ENCODE measurements at regions of chr9 and their contacts with region 1.

Region 1: GRCh38 chr9:71768388-71769174 is at the start of gene CEMIP2:
- DNase-seq: peak; percentile 76 to 94 (median 89)
- ATAC-seq: peak; percentile 81
- H3K4me3 ChIP-seq: peak within 1 kb of the TSS; percentile 94 to 96
- H3K4me3 Mint-ChIP-seq: peak within 1 kb of the TSS; percentile 91
- H3K27ac ChIP-seq: peak within 1 kb of the TSS; percentile 87 to 96
- H3K27ac Mint-ChIP-seq: peak within 1 kb of the TSS; percentile 96
- H3K4me1 ChIP-seq: peaks cover 36% of the 10 kb centered on the region
- H3K4me1 Mint-ChIP-seq: peaks cover 44% of the 10 kb centered on the region
- H3K27me3 ChIP-seq: no peaks in the 10 kb centered on the region
- H3K27me3 Mint-ChIP-seq: no peaks in the 10 kb centered on the region
- CTCF ChIP-seq: peak; percentile 63
- total RNA-seq, gene CEMIP2: 286 to 313 TPM

Region 2: DNA sequence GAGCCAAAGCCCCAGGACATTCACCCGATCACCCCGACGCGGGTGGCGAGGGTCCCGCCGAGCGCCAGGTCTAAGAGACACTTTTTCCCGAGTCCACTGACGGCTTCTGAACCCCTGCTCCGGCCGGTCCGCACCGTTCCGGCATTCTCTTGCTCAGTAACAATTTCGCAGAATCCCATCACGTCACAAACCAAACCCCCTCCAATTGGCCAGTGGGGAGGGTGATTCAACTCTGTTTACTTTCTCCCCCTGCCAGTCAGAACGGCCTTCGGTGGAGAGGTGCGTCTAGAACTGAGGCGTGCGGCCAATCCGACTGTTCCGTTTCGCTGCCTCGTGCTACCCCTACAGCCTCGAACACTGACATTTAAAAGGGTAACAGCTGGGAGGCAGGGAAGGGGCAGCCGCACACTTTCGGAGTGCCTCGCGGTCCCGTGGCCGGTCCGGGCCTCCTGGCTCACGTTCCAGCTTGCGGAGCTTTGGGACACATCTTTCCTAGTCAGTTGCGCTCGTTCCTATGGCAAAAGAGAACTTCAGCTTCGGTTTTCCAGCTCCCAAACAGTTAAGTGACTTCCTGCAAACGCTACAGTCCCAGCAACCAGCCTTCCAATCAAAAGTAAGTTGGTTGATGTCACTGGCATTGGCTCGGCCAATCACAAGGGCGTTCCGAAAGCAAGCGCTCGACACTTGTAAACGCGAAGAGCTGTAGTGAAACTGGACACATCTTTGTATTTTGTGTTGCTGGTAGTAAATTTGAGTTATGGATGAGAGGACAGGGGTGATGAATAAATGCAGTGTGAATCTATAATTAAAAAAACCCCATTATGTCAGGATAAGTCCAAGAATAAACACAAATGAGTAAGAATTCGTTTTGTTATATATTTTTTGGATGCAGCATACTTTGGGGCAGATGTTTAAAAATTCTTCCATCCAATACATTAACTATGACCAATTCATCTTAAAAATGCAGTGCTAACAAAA is 1354.5 kb before region 1 on chr9 and contains the start of gene KLF9:
- CTCF ChIA-PET with region 1: no interaction called
- POLR2A ChIA-PET with region 1: no interaction called
- intact Hi-C with region 1: loop called in 1 of 2 experiments (anchors 5 kb)
- DNase-seq: peak; percentile 80 to 98 (median 90)
- ATAC-seq: peak; percentile 78
- H3K4me3 ChIP-seq: peak within 1 kb of the TSS; percentile 40 to 73
- H3K4me3 Mint-ChIP-seq: peak within 1 kb of the TSS; percentile 99
- H3K27ac ChIP-seq: peak within 1 kb of the TSS; percentile 94 to 99
- H3K27ac Mint-ChIP-seq: peak within 1 kb of the TSS; percentile 100
- H3K4me1 ChIP-seq: peaks cover 39% of the 10 kb centered on the region
- H3K4me1 Mint-ChIP-seq: peaks cover 53% of the 10 kb centered on the region
- H3K27me3 ChIP-seq: no peaks in the 10 kb centered on the region
- H3K27me3 Mint-ChIP-seq: no peaks in the 10 kb centered on the region
- CTCF ChIP-seq: no peak
- total RNA-seq, gene KLF9: 84.0 to 87.1 TPM

Region 3: DNA sequence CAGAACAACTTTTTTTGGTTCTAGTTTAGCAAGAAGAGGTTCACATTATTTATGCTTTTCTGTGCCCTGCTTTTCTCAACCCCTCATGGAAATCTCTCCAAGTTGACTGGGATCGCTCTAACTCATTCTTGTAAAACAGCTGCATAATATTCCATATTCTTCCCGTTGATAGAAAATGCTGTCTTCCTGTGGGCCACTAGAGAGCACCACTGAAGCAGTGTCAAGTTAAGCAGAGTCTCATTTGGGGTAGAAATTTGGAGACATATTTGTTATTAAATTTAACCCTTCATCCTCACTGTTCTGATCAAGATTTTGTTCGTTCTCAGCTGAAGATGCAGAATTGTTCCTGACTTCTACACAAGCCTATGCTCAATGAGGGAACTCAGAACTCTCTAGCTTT is 140.3 kb before region 1 on chr9:
- CTCF ChIA-PET with region 1: interaction called, 5 read pairs
- POLR2A ChIA-PET with region 1: no interaction called
- intact Hi-C with region 1: loop called in 1 of 2 experiments (anchors 2 kb)
- DNase-seq: peak in 2 of 9 experiments; percentile 34 to 48
- ATAC-seq: no peak
- H3K4me3 ChIP-seq: no peak overlapping the region
- H3K4me3 Mint-ChIP-seq: no peak overlapping the region
- H3K27ac ChIP-seq: no peak overlapping the region
- H3K27ac Mint-ChIP-seq: no peak overlapping the region
- H3K4me1 ChIP-seq: no peaks in the 10 kb centered on the region
- H3K4me1 Mint-ChIP-seq: no peaks in the 10 kb centered on the region
- H3K27me3 ChIP-seq: no peaks in the 10 kb centered on the region
- H3K27me3 Mint-ChIP-seq: no peaks in the 10 kb centered on the region
- CTCF ChIP-seq: peak; percentile 24

Region 4: GRCh38 chr9:71748280-71748743 is 20.3 kb before region 1 on chr9:
- CTCF ChIA-PET with region 1: no interaction called
- POLR2A ChIA-PET with region 1: interaction called, 3 read pairs
- intact Hi-C with region 1: loop called (anchors 2 kb)
- DNase-seq: no peak
- ATAC-seq: no peak
- H3K4me3 ChIP-seq: no peak overlapping the region
- H3K4me3 Mint-ChIP-seq: no peak overlapping the region
- H3K27ac ChIP-seq: no peak overlapping the region
- H3K27ac Mint-ChIP-seq: no peak overlapping the region
- H3K4me1 ChIP-seq: peaks cover 8% of the 10 kb centered on the region
- H3K4me1 Mint-ChIP-seq: peaks cover 33% of the 10 kb centered on the region
- H3K27me3 ChIP-seq: no peaks in the 10 kb centered on the region
- H3K27me3 Mint-ChIP-seq: no peaks in the 10 kb centered on the region
- CTCF ChIP-seq: no peak

Region 5: DNA sequence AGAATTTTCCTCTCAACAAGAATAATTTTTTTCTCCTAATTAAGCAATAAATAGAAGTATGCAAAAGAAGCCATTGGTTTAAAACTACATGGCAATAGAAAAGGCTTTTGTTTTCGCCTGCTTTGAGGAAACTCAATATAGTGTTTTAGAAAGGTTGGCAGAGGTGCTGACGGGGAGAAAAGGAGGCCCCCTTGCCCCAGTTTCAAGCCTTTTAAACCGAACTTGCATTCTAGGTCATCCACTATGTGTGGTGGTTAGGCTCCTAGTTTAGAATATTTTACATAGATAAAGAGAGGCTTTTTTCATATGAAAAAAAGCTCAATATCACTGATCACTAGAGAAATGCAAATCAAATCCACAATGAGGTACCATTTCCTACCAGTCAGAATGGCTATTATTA is 33.2 kb after region 1 on chr9:
- CTCF ChIA-PET with region 1: interaction called, 27 read pairs
- POLR2A ChIA-PET with region 1: interaction called, 20 read pairs
- intact Hi-C with region 1: loop called in 1 of 2 experiments (anchors 1 kb)
- DNase-seq: no peak
- ATAC-seq: no peak
- H3K4me3 ChIP-seq: no peak overlapping the region
- H3K4me3 Mint-ChIP-seq: no peak overlapping the region
- H3K27ac ChIP-seq: no peak overlapping the region
- H3K27ac Mint-ChIP-seq: no peak overlapping the region
- H3K4me1 ChIP-seq: peaks cover 8% of the 10 kb centered on the region
- H3K4me1 Mint-ChIP-seq: peaks cover 18% of the 10 kb centered on the region
- H3K27me3 ChIP-seq: no peaks in the 10 kb centered on the region
- H3K27me3 Mint-ChIP-seq: no peaks in the 10 kb centered on the region
- CTCF ChIP-seq: no peak

Region 6: DNA sequence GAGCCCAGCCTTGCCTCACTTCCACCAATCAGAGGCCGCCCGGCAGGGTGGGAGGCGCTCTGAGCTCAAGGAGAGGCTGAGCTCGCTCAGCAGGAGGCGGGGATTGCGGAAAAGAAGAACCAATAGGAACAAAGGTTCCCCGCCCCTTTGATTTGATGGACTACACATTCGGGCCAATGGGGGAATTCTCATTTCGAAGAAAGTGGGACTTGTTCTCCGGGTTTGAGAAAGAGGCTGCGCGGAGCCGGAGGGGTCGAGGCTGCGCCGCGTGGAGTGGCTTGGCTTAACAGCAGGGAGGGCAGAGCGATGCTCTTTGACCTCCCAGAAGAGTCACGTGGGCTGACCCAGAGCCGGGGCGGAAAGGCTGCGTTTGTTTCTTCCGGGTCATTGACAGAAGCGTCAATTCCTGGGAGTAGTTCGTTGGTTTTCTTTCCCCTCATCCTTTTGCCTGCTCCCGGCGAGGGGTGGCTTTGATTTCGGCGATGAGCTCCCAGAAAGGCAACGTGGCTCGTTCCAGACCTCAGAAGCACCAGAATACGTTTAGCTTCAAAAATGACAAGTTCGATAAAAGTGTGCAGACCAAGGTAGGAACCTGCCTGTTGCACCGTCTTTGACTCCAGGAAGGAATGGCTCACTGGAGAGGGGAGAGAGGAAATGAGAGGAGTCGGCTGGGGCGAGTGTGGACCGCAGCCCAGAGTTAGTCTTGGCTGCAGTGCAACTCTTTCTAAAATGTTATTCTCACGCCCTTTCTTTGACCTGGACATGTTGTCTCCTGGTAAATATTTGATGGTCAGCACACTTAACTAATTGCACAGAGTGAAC is 142.9 kb after region 1 on chr9 and contains the start of gene C9orf85:
- CTCF ChIA-PET with region 1: no interaction called
- POLR2A ChIA-PET with region 1: interaction called, 10 read pairs
- intact Hi-C with region 1: loop called (anchors 1 to 5 kb)
- DNase-seq: peak; percentile 91 to 99 (median 96)
- ATAC-seq: peak; percentile 93
- H3K4me3 ChIP-seq: peak within 1 kb of the TSS; percentile 80 to 89
- H3K4me3 Mint-ChIP-seq: peak within 1 kb of the TSS; percentile 99
- H3K27ac ChIP-seq: peak within 1 kb of the TSS; percentile 63 to 84
- H3K27ac Mint-ChIP-seq: peak within 1 kb of the TSS; percentile 96
- H3K4me1 ChIP-seq: peaks cover 26% of the 10 kb centered on the region
- H3K4me1 Mint-ChIP-seq: peaks cover 71% of the 10 kb centered on the region
- H3K27me3 ChIP-seq: no peaks in the 10 kb centered on the region
- H3K27me3 Mint-ChIP-seq: no peaks in the 10 kb centered on the region
- CTCF ChIP-seq: no peak
- total RNA-seq, gene C9orf85: 3.1 to 4.0 TPM